Activated T-helper 2 cell treated with anti-CD3 and anti-CD28 coated beads, Interferon-gamma antibody, Interleukin-2, Interleukin-4, amounts not matched to agents 10 μg/mL and 5 μg/mL and 100 μg/mL, durations not matched to agents 14 hours and 24 hours and 36 hours (primary cell): ENCODE measurements at regions of chr17 and their contacts with region 1.

Region 1: DNA sequence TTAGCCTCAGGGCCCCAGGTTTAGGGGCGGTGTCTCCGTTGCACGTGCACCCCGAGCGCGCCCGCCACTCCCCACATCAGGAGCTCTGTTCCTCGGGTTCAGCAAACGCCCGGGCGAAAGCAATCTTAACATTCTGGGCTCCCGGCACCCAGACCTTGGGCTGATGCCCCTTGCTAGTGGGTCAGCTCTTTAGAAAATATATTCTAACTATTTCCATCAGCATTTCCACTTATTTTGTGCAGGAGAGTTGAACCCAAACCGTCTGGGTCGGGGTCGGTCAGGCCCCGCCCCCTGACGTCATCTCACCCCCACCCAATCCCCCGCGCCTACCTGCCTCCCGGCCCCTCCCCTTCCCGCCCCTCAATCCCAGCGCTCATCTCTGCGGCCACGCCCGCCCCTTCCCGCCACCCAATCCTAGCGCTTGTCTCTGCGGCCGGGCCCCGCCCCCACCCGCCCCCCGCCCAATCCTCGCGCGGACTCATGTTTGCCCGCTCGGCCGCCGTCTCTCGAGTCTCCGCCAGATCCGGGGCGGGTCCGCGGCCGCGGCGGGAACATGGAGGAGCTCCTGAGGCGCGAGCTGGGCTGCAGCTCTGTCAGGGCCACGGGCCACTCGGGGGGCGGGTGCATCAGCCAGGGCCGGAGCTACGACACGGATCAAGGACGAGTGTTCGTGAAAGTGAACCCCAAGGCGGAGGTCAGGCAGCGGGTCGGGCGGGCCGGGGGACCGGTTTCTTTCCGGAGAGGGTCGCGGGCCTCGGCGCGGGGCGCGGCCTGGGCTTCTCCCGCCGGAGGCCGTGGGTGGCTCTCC is at the start of gene FN3KRP:
- DNase-seq: peak; percentile 86
- H3K4me3 Mint-ChIP-seq: peak within 1 kb of the TSS; percentile 93
- H3K27ac Mint-ChIP-seq: peak within 1 kb of the TSS; percentile 85
- H3K4me1 Mint-ChIP-seq: peaks cover 10% of the 10 kb centered on the region
- H3K27me3 Mint-ChIP-seq: no peaks in the 10 kb centered on the region
- total RNA-seq, gene FN3KRP: 39.6 and 42.3 TPM in 2 replicates

Region 2: GRCh38 chr17:82518826-82519810 is 197.3 kb before region 1 on chr17 and contains the start of gene FOXK2:
- intact Hi-C with region 1: no loop called
- DNase-seq: peak; percentile 95
- H3K4me3 Mint-ChIP-seq: peak within 1 kb of the TSS; percentile 93
- H3K27ac Mint-ChIP-seq: peak within 1 kb of the TSS; percentile 95
- H3K4me1 Mint-ChIP-seq: peaks cover 16% of the 10 kb centered on the region
- H3K27me3 Mint-ChIP-seq: no peaks in the 10 kb centered on the region
- total RNA-seq, gene FOXK2: 92.9 and 95.2 TPM in 2 replicates

Region 3: DNA sequence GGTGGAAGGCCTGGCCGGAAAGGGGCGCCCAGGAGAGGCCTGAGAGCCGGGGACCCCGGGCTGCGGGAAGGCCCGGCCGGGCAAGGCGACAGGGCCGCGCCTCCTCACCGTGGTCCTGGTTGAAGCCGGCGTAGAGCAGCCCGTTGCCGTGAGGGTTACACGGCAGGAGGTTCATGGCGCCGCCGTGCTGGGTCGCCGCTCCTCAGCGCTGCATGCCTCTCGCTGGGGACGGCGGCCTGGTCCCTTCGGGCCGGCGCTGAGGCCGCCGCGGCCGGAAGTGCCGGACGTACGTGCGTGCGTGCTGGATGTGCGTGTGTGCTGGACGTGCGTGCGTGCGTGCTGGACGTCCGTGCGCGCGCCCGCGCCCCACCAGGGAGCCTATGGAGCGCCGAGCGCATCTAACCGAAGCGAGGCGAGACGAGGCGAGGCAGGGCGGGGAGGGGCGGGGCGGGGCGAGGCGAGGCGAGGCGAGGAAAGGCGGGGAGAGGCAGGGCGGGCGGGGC is 68.2 kb before region 1 on chr17 and contains the start of gene WDR45B:
- intact Hi-C with region 1: loop called (anchors 1 kb)
- DNase-seq: peak; percentile 86
- H3K4me3 Mint-ChIP-seq: peak within 1 kb of the TSS; percentile 84
- H3K27ac Mint-ChIP-seq: peak within 1 kb of the TSS; percentile 71
- H3K4me1 Mint-ChIP-seq: peaks cover 10% of the 10 kb centered on the region
- H3K27me3 Mint-ChIP-seq: no peaks in the 10 kb centered on the region
- total RNA-seq, gene WDR45B: 63.1 and 66.9 TPM in 2 replicates

Region 4: GRCh38 chr17:82687375-82687861 is 29.0 kb before region 1 on chr17:
- intact Hi-C with region 1: no loop called
- DNase-seq: no peak
- H3K4me3 Mint-ChIP-seq: no peak overlapping the region
- H3K27ac Mint-ChIP-seq: no peak overlapping the region
- H3K4me1 Mint-ChIP-seq: peaks cover 8% of the 10 kb centered on the region
- H3K27me3 Mint-ChIP-seq: no peaks in the 10 kb centered on the region

Region 5: DNA sequence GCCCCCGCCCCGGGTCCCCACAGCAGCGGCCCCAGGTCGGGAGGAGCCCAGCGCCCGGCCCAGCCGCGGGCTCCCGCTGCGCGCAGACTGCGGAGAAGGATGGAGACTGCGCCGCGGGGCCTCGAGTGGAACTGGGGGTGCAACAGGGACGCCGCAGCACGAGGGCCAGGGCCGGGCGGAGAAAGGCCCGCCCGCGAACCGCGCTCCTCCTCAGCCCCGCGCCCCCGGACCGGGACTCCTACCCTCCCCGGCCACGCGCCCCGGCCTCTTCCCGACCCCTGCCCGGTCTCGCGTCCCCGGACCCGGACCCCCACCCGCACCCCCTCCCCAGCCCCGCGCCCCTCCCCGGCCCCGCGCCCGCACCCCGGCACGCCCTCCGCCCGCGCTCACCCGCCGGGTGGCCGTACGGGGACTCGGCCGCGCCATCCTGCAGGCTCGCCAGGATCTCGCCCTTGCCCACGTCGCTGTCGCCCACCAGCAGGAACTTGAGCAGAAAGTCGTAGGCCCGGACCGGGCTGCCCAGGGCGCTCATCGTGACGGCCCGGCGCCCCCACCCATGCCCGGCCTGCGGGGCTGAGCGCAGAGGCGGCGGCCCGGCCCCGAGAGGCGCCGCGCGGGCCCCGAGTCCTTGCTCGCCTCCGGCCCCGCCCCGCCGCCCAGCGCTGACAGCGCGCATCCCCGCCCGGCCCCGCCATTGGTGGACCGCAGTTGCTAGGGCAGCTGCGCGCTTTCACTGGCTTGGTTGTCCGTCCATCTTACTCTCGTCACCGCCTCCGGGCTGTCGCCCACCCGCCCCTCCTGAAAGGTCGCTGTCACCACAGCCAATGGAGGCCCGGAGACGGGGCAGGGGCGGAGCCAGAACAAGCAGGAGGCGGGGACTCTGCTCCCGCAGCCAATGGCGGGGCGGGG is 18.1 kb before region 1 on chr17 and contains the start of gene RAB40B:
- intact Hi-C with region 1: loop called (anchors 1 kb)
- DNase-seq: peak; percentile 98
- H3K4me3 Mint-ChIP-seq: peak within 1 kb of the TSS; percentile 77
- H3K27ac Mint-ChIP-seq: no peak within 1 kb of the TSS
- H3K4me1 Mint-ChIP-seq: peaks cover 6% of the 10 kb centered on the region
- H3K27me3 Mint-ChIP-seq: peaks cover 5% of the 10 kb centered on the region
- total RNA-seq, gene RAB40B: 4.8 and 5.4 TPM in 2 replicates

Region 6: GRCh38 chr17:82751571-82752370 is 35.4 kb after region 1 on chr17 and contains the start of gene TBCD:
- intact Hi-C with region 1: loop called (anchors 2 kb)
- DNase-seq: peak; percentile 82
- H3K4me3 Mint-ChIP-seq: peak within 1 kb of the TSS; percentile 86
- H3K27ac Mint-ChIP-seq: peak within 1 kb of the TSS; percentile 58
- H3K4me1 Mint-ChIP-seq: peaks cover 20% of the 10 kb centered on the region
- H3K27me3 Mint-ChIP-seq: no peaks in the 10 kb centered on the region
- total RNA-seq, gene TBCD: 120 and 125 TPM in 2 replicates

Region 7: GRCh38 chr17:82836823-82837357 is 120.5 kb after region 1 on chr17:
- intact Hi-C with region 1: no loop called
- DNase-seq: no peak
- H3K4me3 Mint-ChIP-seq: no peak overlapping the region
- H3K27ac Mint-ChIP-seq: no peak overlapping the region
- H3K4me1 Mint-ChIP-seq: no peaks in the 10 kb centered on the region
- H3K27me3 Mint-ChIP-seq: no peaks in the 10 kb centered on the region

Region 8: GRCh38 chr17:82911822-82912221 is 195.4 kb after region 1 on chr17:
- intact Hi-C with region 1: no loop called
- DNase-seq: no peak
- H3K4me3 Mint-ChIP-seq: no peak overlapping the region
- H3K27ac Mint-ChIP-seq: peak overlapping the region; percentile 31
- H3K4me1 Mint-ChIP-seq: peaks cover 14% of the 10 kb centered on the region
- H3K27me3 Mint-ChIP-seq: no peaks in the 10 kb centered on the region